ENCODE measurements at regions of chr1 and their contacts with region 1.

Region 1: DNA sequence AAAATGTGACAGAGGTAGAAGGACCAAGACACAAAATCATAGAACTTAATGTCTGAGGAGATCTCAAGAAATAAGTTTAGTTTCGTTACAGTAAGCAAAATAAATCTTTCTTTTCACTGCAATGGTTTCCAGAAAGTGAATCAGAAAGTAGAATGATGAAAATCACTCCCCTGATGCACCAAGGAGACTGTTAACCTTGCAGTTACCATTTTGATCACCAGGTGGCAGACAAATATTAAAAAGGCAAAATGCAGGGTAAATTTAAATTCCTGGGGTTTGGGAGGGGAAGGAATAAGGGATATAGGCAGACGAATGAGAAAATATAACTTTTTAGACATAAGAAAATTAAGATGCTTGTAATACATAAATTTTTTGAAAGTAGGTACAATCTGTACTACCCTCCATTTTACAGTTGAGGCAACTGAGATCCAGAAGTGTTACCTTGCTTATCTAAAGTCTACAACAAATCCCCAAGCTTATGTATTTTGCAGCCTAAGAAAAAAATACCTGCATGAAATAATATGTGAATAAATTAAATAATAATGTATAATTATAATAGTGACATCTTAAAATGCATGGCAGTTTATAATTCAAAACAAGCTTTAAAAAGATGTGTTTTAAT is 253.2 kb downstream of the CRB1 start:
- H3K4me3 ChIP-seq: no peak overlapping the region
- H3K27ac ChIP-seq: no peak overlapping the region
- H3K4me1 ChIP-seq: no peaks in the 10 kb centered on the region
- CTCF ChIP-seq: 0 out of 2 replicates have a peak, but pooled peaks have one; percentile 17

Region 2: DNA sequence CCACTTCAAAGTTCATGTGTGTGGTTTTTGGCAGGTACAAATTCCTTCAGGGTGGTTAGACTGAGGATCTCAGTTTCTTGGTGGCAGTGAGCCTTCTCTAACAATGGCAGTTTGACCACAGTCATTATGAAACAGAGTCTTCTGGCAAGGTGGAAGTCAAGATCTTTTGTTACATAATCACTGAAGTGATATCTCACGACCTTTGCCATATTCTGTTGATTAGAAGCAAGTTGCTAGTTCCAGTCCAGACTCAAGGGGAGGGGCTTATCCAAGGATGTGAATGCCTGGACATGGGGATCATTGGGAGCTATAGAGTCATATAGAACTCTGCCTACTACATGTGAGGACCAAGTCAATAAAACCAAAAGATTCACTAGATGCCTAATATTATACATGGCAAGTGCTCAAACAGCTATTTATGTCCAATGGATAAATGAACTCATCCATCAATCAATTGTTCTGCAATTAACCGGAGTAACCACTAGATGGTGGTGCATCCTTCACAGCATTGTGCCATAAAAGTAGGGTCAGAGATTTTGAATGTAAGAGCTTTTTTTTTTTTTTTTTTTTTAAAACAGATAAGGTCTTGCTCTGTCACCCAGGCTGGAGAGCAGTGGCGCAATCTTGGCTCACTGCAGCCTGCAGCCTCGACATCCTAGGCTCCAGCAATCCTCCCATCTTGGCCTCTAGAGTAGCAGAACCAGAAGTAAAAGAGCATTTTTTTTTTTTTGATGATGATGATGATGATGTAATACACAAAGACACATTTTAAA is 121.3 kb before region 1 on chr1:
- CTCF ChIA-PET with region 1: interaction called, 14 read pairs
- POLR2A ChIA-PET with region 1: no interaction called
- H3K4me3 ChIP-seq: no peak overlapping the region
- H3K27ac ChIP-seq: no peak overlapping the region
- H3K4me1 ChIP-seq: no peaks in the 10 kb centered on the region
- CTCF ChIP-seq: peak; percentile 40

Region 3: DNA sequence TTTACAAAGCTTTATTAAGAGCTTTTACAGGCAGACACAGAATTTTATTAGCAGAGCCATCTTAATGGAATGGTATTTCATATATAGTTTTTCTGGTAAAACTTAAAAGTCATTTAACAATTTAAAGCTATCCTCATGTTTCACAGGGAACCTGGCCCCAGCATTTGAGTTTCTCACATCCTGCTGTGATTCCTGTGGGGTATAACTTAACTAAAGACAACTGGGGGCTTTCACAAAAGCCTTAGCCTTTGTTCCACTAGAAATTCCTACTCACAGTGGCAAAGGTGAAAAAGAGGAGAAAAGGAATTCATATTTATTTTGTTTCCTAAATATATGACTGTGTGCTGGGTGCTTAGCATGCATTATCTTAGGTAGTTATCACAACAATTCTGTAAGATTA is 20.2 kb after region 1 on chr1:
- CTCF ChIA-PET with region 1: interaction called, 13 read pairs
- POLR2A ChIA-PET with region 1: no interaction called
- H3K4me3 ChIP-seq: no peak overlapping the region
- H3K27ac ChIP-seq: no peak overlapping the region
- H3K4me1 ChIP-seq: no peaks in the 10 kb centered on the region
- CTCF ChIP-seq: no peak

Region 4: GRCh38 chr1:197587815-197588517 is 66.7 kb after region 1 on chr1:
- CTCF ChIA-PET with region 1: no interaction called
- POLR2A ChIA-PET with region 1: no interaction called
- H3K4me3 ChIP-seq: no peak overlapping the region
- H3K27ac ChIP-seq: no peak overlapping the region
- H3K4me1 ChIP-seq: no peaks in the 10 kb centered on the region
- CTCF ChIP-seq: no peak

Region 5: GRCh38 chr1:197868751-197869489 is 347.7 kb after region 1 on chr1:
- CTCF ChIA-PET with region 1: interaction called, 12 read pairs
- POLR2A ChIA-PET with region 1: no interaction called
- H3K4me3 ChIP-seq: no peak overlapping the region
- H3K27ac ChIP-seq: no peak overlapping the region
- H3K4me1 ChIP-seq: no peaks in the 10 kb centered on the region
- CTCF ChIP-seq: no peak

Measured in HEK293 (cell line).